Activated CD4-positive, alpha-beta memory T cell treated with anti-CD3 and anti-CD28 coated beads for 36 hours (primary cell): ENCODE measurements at regions of chr7 and their contacts with region 1.

Region 1: DNA sequence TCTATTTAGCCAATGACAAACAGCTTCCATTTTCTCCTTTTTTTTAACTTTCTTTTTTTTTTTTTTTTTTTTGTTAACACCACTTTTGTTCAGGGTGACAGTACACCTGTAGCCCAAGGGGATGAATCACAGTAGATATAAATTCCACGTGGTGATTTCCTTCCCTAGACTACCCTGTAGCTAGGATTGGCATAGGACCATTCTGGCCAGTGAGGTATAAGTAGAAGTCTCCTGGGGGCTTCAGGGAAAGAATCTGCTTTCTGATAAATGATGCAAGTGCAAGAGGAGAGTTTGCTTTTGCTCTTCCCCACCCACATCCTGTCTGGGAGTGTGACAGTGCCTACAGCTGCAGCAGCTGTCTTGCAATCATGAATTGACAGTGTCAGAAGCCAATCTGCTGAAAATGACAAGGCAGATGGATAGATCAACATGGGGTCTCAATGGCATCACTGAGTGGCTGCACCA is 63.2 kb upstream of the TOMM7 start:
- DNase-seq: peak; percentile 81
- H3K4me3 Mint-ChIP-seq: peak overlapping the region; percentile 45
- H3K27ac Mint-ChIP-seq: peak overlapping the region; percentile 88
- H3K4me1 Mint-ChIP-seq: peaks cover 39% of the 10 kb centered on the region
- H3K27me3 Mint-ChIP-seq: no peaks in the 10 kb centered on the region

Region 2: GRCh38 chr7:21939136-21939857 is 946.5 kb before region 1 on chr7:
- CTCF ChIA-PET with region 1: no interaction called
- POLR2A ChIA-PET with region 1: no interaction called
- intact Hi-C with region 1: loop called (anchors 1 kb)
- DNase-seq: peak; percentile 82
- H3K4me3 Mint-ChIP-seq: peak overlapping the region; percentile 23
- H3K27ac Mint-ChIP-seq: peak overlapping the region; percentile 85
- H3K4me1 Mint-ChIP-seq: peaks cover 59% of the 10 kb centered on the region
- H3K27me3 Mint-ChIP-seq: no peaks in the 10 kb centered on the region

Region 3: DNA sequence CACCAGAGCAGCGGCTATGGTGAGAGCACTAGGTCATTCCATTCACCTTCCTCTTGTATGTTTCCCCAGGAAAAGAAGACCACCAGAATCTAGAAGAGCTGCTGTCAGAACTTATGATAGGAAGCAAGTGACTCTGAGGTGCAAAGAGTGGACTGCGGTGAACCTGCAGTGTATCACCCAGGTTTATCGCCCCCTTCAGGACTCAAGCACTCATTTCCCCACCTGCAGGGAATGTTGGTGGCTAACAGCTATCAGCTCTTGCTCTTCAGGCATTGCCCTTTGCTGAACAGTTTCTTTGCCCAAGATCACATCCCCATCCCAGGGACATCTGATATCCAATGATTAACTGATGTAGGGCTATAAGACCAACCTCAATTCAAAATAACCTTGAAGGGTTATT is 225.1 kb before region 1 on chr7:
- CTCF ChIA-PET with region 1: no interaction called
- POLR2A ChIA-PET with region 1: no interaction called
- intact Hi-C with region 1: loop called (anchors 5 kb)
- DNase-seq: no peak
- H3K4me3 Mint-ChIP-seq: no peak overlapping the region
- H3K27ac Mint-ChIP-seq: no peak overlapping the region
- H3K4me1 Mint-ChIP-seq: peaks cover 26% of the 10 kb centered on the region
- H3K27me3 Mint-ChIP-seq: peaks cover 15% of the 10 kb centered on the region

Region 4: DNA sequence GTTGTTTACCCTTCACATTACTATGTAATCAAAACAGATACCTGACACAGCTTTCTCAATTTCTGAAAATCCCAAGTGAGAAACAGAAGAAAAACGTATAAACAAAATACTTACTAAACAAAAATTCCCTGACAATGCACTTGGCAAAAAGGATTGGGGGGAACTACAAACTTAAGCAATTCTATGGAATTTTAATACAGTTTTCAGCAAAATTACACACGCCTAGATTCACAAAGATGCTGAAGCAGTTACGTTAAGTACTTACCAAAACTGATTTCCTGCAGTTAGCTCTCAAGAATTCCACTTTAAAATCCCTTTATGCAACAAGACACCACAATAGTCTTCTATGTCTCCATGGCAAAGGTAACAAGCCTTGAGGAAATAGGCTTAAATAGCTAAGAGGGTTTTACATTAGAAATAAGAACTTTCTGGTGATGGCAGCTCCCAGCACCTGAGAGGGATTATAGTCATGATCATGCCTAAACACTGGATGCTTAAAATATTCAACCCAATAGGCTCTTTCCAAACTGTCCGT is 74.0 kb before region 1 on chr7:
- CTCF ChIA-PET with region 1: no interaction called
- POLR2A ChIA-PET with region 1: no interaction called
- intact Hi-C with region 1: no loop called
- DNase-seq: no peak
- H3K4me3 Mint-ChIP-seq: no peak overlapping the region
- H3K27ac Mint-ChIP-seq: no peak overlapping the region
- H3K4me1 Mint-ChIP-seq: peaks cover 9% of the 10 kb centered on the region
- H3K27me3 Mint-ChIP-seq: no peaks in the 10 kb centered on the region

Region 5: GRCh38 chr7:22822486-22823141 is 63.2 kb before region 1 on chr7 and contains the start of gene TOMM7:
- CTCF ChIA-PET with region 1: interaction called, 3 read pairs
- POLR2A ChIA-PET with region 1: interaction called, 4 read pairs
- intact Hi-C with region 1: loop called (anchors 1 kb)
- DNase-seq: peak; percentile 92
- H3K4me3 Mint-ChIP-seq: peak within 1 kb of the TSS; percentile 96
- H3K27ac Mint-ChIP-seq: peak within 1 kb of the TSS; percentile 90
- H3K4me1 Mint-ChIP-seq: peaks cover 34% of the 10 kb centered on the region
- H3K27me3 Mint-ChIP-seq: peaks cover 11% of the 10 kb centered on the region
- total RNA-seq, gene TOMM7: 277 to 279 TPM

Region 6: DNA sequence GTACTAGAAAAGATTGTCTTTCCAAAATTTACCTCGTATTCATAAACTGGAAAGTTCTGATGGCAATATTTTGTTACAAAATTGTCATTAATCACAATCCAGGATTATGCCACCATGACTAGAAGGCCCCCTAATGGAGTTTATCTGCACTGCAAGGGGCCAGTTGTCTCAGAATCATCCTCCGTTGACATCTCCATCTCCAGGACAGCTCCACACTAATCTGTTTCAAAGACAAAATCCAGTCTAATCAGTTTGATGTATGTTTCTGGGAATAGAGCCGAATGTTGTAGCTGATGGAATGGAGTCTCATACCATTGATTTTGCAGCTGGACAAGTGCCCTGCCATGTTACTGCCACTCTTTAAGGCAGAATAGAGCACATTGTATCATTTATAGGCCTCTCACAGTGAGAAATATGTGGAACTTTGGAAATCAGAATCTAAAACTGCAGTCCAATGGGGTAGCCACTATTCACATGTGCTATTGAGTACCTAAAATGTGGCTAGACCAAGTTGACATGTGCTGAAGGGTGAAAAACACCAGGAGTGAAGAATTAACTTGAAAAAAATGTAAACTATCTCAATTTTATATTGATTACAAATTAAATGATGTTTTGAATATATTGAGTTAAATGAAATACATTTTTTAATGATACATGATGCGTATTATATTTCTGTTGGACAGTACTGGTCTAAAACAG is 24.9 kb before region 1 on chr7:
- CTCF ChIA-PET with region 1: interaction called, 5 read pairs
- POLR2A ChIA-PET with region 1: interaction called, 4 read pairs
- intact Hi-C with region 1: loop called (anchors 1 kb)
- DNase-seq: peak; percentile 29
- H3K4me3 Mint-ChIP-seq: no peak overlapping the region
- H3K27ac Mint-ChIP-seq: no peak overlapping the region
- H3K4me1 Mint-ChIP-seq: peaks cover 37% of the 10 kb centered on the region
- H3K27me3 Mint-ChIP-seq: no peaks in the 10 kb centered on the region

Region 7: GRCh38 chr7:22949944-22950343 is 64.1 kb after region 1 on chr7:
- CTCF ChIA-PET with region 1: no interaction called
- POLR2A ChIA-PET with region 1: no interaction called
- intact Hi-C with region 1: no loop called
- DNase-seq: no peak
- H3K4me3 Mint-ChIP-seq: no peak overlapping the region
- H3K27ac Mint-ChIP-seq: no peak overlapping the region
- H3K4me1 Mint-ChIP-seq: no peaks in the 10 kb centered on the region
- H3K27me3 Mint-ChIP-seq: no peaks in the 10 kb centered on the region